ENCODE measurements at regions of chr4 and their contacts with region 1.

Region 1: GRCh38 chr4:151331276-151332042 is 6.1 kb upstream of the SH3D19 start:
- DNase-seq: no peak
- H3K4me3 ChIP-seq: no peak overlapping the region
- H3K27ac ChIP-seq: no peak overlapping the region
- H3K4me1 ChIP-seq: no peaks in the 10 kb centered on the region
- H3K27me3 ChIP-seq: no peaks in the 10 kb centered on the region
- CTCF ChIP-seq: no peak
- POLR2A ChIP-seq: no peak

Region 2: GRCh38 chr4:151218343-151218742 is 113.1 kb before region 1 on chr4:
- CTCF ChIA-PET with region 1: no interaction called
- POLR2A ChIA-PET with region 1: no interaction called
- dilution Hi-C with region 1: no loop called
- intact Hi-C with region 1: no loop called
- DNase-seq: peak; percentile 45
- H3K4me3 ChIP-seq: no peak overlapping the region
- H3K27ac ChIP-seq: no peak overlapping the region
- H3K4me1 ChIP-seq: peaks cover 34% of the 10 kb centered on the region
- H3K27me3 ChIP-seq: no peaks in the 10 kb centered on the region
- CTCF ChIP-seq: no peak
- POLR2A ChIP-seq: no peak

Region 3: DNA sequence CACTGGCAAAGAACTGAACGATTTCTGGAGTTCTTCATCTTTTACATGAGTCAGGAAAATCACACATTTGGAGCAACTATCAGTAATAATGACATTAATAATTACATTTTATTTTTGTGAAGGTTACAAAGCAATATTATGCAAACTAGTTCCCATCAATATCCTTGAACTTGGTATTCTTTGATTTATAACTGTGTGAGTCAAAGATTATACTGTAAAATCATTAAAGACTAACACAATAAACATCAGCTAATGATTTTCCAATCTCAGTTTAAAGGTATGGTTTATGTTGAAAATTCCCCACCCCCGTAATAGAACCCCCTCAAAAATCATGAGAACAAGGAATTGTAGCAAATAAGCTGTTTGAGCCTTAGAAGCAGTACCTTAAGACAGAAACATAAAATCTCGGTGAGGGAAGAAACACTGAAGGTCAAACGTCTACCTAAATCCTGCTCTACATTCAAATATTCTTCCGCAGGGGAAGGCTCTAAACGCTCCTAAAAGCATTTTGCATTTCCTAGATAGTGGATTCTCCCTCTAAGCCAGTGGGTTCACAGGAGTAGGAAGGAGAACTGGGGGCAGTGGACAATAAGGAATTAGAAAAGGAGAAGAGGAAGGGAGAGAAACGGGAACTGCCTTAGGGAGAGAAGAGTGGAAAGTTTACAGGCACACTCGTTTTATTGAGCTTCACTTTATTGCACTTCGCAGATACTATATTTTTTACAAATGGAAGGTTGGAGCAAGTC is 16.2 kb after region 1 on chr4:
- CTCF ChIA-PET with region 1: interaction called, 4 read pairs
- POLR2A ChIA-PET with region 1: no interaction called
- dilution Hi-C with region 1: no loop called
- intact Hi-C with region 1: loop called (anchors 1 kb)
- DNase-seq: no peak
- H3K4me3 ChIP-seq: no peak overlapping the region
- H3K27ac ChIP-seq: no peak overlapping the region
- H3K4me1 ChIP-seq: no peaks in the 10 kb centered on the region
- H3K27me3 ChIP-seq: peaks cover 2 to 3% of the 10 kb centered on the region in 2 experiments
- CTCF ChIP-seq: no peak
- POLR2A ChIP-seq: no peak